PC-3 (cell line): ENCODE measurements at regions of chr1 and their contacts with region 1.

Region 1: DNA sequence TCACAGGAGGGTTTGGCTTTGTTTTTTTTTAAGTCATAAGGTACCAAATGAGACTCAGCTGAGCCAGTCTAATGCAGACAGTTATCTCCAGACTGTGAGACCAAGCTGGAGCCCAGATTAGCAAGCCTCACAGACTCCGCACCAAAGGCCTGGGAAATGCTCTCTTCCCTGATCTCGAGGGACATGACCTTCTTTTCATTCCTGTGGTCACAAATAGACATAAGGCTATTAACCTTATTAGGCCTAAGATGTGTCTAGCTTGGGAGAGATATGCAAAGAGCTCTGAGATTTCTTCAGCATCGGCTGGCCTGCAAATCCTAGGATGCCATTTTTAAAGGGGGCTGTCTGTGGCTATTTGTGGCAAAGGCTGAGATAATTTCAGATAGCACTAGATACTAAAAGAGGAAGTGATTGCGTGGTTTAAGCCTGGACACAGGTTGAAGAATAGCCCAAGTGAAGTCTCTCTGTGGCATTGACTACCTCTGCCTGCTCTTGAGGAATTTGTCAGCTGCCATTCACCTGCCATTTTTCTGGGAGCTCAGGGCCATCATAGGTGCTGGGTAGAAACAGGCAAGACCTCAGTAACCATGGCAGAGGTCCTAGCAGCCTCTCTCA is 301.3 kb downstream of the SIPA1L2 start:
- DNase-seq: no peak
- ATAC-seq: no peak
- H3K4me3 ChIP-seq: no peak overlapping the region
- H3K27ac ChIP-seq: no peak overlapping the region
- H3K4me1 ChIP-seq: no peaks in the 10 kb centered on the region
- H3K27me3 ChIP-seq: no peaks in the 10 kb centered on the region
- CTCF ChIP-seq: no peak

Region 2: DNA sequence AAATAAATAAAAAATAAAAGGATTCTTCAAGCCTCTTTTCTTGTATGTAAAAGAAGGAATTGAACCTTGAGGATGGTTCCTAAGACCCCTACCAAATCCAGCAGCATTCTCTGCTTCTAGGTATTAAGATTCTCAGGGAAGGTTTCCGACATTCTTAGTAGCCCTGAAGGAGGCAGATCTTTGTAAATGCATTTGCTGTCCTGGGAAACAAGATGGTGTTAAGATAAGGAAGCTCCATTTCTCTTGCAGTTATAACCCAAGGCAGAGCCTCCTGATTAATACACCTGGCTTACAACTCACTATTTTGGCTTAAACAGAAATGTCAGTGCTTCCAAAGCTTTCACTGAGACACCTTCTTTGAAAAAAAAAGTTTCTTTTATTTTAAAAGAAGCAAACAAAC is 308.2 kb before region 1 on chr1:
- CTCF ChIA-PET with region 1: no interaction called
- POLR2A ChIA-PET with region 1: no interaction called
- intact Hi-C with region 1: no loop called
- DNase-seq: no peak
- ATAC-seq: no peak
- H3K4me3 ChIP-seq: no peak overlapping the region
- H3K27ac ChIP-seq: no peak overlapping the region
- H3K4me1 ChIP-seq: no peaks in the 10 kb centered on the region
- H3K27me3 ChIP-seq: no peaks in the 10 kb centered on the region
- CTCF ChIP-seq: no peak

Region 3: DNA sequence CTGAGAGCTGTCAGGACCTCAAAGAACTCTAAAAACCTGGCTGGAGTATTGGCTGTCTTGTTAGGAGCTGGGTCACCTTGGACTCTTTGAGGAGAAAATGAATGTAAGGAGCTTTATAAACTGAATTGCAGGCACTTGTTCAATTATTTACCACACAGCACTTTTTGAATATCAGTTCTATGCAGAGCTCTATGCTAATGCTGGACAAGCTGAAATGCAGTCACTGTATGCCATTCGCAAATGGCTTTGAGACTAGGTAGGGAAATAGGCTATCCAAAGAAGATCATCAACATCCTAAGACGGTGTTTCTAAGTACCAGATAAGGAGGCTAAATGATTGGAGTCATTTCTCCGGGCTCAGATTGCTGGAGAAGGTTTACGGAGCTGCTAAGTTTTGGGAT is 32.1 kb before region 1 on chr1:
- CTCF ChIA-PET with region 1: no interaction called
- POLR2A ChIA-PET with region 1: no interaction called
- intact Hi-C with region 1: loop called (anchors 2 kb)
- DNase-seq: no peak
- ATAC-seq: no peak
- H3K4me3 ChIP-seq: no peak overlapping the region
- H3K27ac ChIP-seq: no peak overlapping the region
- H3K4me1 ChIP-seq: peaks cover 9% of the 10 kb centered on the region
- H3K27me3 ChIP-seq: no peaks in the 10 kb centered on the region
- CTCF ChIP-seq: no peak